Psoas muscle (tissue), 8 donors: ENCODE measurements at regions of chr3 and their contacts with region 1.

Region 1: DNA sequence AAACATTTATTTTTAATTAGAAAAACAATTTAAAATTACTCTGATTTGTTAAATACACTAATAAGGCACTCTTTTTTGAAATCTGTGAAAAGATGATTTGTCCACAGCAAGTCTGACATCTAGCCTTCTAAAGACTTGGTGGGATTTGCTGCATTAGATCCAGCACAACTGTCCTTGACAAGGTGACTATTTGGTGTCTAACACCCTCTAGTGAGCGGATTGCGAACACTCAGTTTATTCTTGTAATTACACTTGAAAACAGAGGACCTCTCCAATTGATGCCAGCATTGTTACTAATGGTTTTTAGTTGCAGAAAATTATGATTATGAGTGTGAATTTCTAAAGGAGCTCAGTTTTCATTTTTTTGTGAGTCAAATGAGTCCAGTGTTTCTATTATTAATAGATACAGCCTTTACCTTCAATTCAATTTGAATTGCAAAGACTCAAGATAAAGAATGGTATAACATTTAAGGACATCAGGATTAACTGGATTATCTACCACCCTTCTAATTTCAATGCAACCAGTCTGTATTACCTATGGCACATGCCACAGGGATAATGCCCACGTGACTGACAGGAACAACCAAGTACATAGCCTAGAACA is 29.7 kb upstream of the STRIT1 start:
- DNase-seq: no peak
- ATAC-seq: peak; percentile 84 to 97 (median 93)
- H3K4me3 ChIP-seq: no peak overlapping the region
- H3K27ac ChIP-seq: no peak overlapping the region
- H3K4me1 ChIP-seq: peaks cover 12% of the 10 kb centered on the region
- H3K27me3 ChIP-seq: no peaks in the 10 kb centered on the region
- CTCF ChIP-seq: peak; percentile 78

Region 2: GRCh38 chr3:154323891-154324738 is 999.0 kb before region 1 on chr3 and contains the start of gene DHX36:
- intact Hi-C with region 1: loop called in 1 of 2 experiments (anchors 10 kb)
- DNase-seq: peak; percentile 89 to 94
- ATAC-seq: peak; percentile 96 to 98 (median 96)
- H3K4me3 ChIP-seq: peak within 1 kb of the TSS; percentile 93
- H3K27ac ChIP-seq: peak within 1 kb of the TSS; percentile 86
- H3K4me1 ChIP-seq: peaks cover 30% of the 10 kb centered on the region
- H3K27me3 ChIP-seq: no peaks in the 10 kb centered on the region
- CTCF ChIP-seq: no peak
- total RNA-seq, gene DHX36: 52.4 to 117 (median 78.7) TPM

Region 3: GRCh38 chr3:154334973-154335420 is 988.2 kb before region 1 on chr3:
- intact Hi-C with region 1: loop called in 1 of 2 experiments (anchors 2 kb)
- DNase-seq: no peak
- ATAC-seq: peak in 1 of 4 donors; percentile 68
- H3K4me3 ChIP-seq: no peak overlapping the region
- H3K27ac ChIP-seq: no peak overlapping the region
- H3K4me1 ChIP-seq: no peaks in the 10 kb centered on the region
- H3K27me3 ChIP-seq: peaks cover 0 to 4% (median 3%) of the 10 kb centered on the region in 3 donors
- CTCF ChIP-seq: peak; percentile 70

Region 4: DNA sequence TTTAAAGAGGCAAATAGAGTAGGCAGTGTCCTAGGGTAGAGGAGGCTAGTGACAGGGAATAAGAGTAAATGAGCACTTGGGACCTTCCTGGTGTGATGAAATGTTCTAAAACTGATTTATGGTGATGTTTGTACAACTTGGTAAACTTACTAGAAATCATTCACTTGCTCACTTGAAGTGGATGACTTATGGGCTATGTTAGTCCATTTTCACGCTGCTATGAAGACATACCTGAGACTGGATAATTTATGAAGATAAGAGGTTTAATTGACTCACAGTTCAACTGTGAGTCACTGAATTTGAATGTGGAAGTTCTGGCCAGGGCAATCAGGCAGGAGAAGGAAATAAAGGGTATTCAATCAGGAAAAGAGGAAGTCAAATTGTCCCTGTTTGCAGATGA is 967.2 kb before region 1 on chr3:
- intact Hi-C with region 1: no loop called
- DNase-seq: no peak
- ATAC-seq: no peak
- H3K4me3 ChIP-seq: no peak overlapping the region
- H3K27ac ChIP-seq: no peak overlapping the region
- H3K4me1 ChIP-seq: no peaks in the 10 kb centered on the region
- H3K27me3 ChIP-seq: peaks cover 0 to 4% (median 0%) of the 10 kb centered on the region in 3 donors
- CTCF ChIP-seq: no peak

Region 5: GRCh38 chr3:154758109-154758868 is 564.9 kb before region 1 on chr3:
- intact Hi-C with region 1: loop called (anchors 2 to 5 kb)
- DNase-seq: no peak
- ATAC-seq: peak in 1 of 4 donors; percentile 67
- H3K4me3 ChIP-seq: no peak overlapping the region
- H3K27ac ChIP-seq: no peak overlapping the region
- H3K4me1 ChIP-seq: peaks cover 7% of the 10 kb centered on the region
- H3K27me3 ChIP-seq: no peaks in the 10 kb centered on the region
- CTCF ChIP-seq: peak; percentile 63

Region 6: DNA sequence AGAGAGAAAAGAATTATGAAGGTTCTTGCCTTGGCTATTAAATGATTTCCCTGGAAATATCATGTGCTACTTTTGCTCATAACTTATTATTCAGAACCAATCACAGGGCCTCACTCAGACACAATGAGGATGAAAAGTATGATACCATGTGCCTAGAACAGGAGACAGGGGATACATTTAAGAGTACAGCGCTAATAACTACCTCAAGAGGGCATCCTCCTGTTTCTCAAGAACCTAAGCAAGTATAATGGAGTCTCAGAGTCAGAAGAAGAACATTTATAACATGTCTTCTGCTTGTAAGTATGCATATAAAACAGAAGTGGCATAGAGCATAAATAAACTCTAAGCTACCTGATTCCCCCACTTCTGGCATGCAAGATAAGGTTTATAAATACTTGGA is 368.4 kb before region 1 on chr3:
- intact Hi-C with region 1: loop called (anchors 1 to 10 kb)
- DNase-seq: no peak
- ATAC-seq: peak in 3 of 4 donors; percentile 67 to 84 (median 78)
- H3K4me3 ChIP-seq: no peak overlapping the region
- H3K27ac ChIP-seq: no peak overlapping the region
- H3K4me1 ChIP-seq: peaks cover 6% of the 10 kb centered on the region
- H3K27me3 ChIP-seq: no peaks in the 10 kb centered on the region
- CTCF ChIP-seq: peak; percentile 41

Region 7: GRCh38 chr3:155079746-155080487 is 243.2 kb before region 1 on chr3 and contains the start of gene MME:
- intact Hi-C with region 1: loop called (anchors 10 kb)
- DNase-seq: peak; percentile 58 to 81
- ATAC-seq: peak; percentile 87 to 94 (median 92)
- H3K4me3 ChIP-seq: peak within 1 kb of the TSS; percentile 90
- H3K27ac ChIP-seq: peak within 1 kb of the TSS; percentile 73
- H3K4me1 ChIP-seq: no peaks in the 10 kb centered on the region
- H3K27me3 ChIP-seq: peaks cover 0 to 8% (median 0%) of the 10 kb centered on the region in 3 donors
- CTCF ChIP-seq: no peak
- total RNA-seq, gene MME: 25.6 to 44.1 (median 41.4) TPM

Region 8: GRCh38 chr3:155184011-155184410 is 139.2 kb before region 1 on chr3:
- intact Hi-C with region 1: loop called in 1 of 2 experiments (anchors 5 kb)
- DNase-seq: no peak
- ATAC-seq: no peak
- H3K4me3 ChIP-seq: no peak overlapping the region
- H3K27ac ChIP-seq: no peak overlapping the region
- H3K4me1 ChIP-seq: peaks cover 22% of the 10 kb centered on the region
- H3K27me3 ChIP-seq: no peaks in the 10 kb centered on the region
- CTCF ChIP-seq: no peak